B cell (primary cell): ENCODE measurements at regions of chr4 and their contacts with region 1.

Region 1: DNA sequence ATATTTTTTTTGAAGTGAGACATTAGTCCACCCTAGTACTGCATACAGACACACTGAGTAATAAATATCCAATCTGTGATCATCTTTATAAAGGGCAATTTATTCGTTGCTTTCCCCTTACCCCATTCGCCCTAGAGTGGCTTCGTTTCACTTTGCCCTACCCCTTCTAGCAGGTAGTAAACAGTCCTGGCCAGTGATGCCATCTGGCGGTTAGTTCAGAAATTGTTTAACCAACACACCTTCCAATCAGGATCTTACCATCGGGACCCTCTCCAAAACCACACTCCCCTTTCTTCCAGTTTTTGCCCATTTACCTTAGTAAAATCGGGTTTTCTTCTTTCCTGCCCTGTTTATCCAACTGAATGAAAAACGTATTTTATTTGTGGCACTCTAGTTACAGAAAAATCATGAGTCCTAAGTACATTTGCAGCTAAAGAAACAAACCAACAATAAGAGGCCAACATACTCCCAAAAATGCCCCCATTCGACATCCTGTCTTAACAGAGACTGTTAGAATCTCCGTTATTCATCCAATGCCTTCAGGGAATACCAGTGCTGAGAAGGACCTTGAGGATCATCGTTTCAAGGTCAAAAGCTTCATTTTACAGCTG is 2.2 kb downstream of the PPA2 start:
- DNase-seq: peak; percentile 83
- ATAC-seq: peak; percentile 32
- H3K4me3 ChIP-seq: no peak overlapping the region
- H3K4me3 Mint-ChIP-seq: peak overlapping the region; percentile 75
- H3K27ac ChIP-seq: no peak overlapping the region
- H3K27ac Mint-ChIP-seq: peak overlapping the region; percentile 42
- H3K4me1 ChIP-seq: peaks cover 17 to 23% of the 10 kb centered on the region in 2 donors
- H3K4me1 Mint-ChIP-seq: peaks cover 43% of the 10 kb centered on the region
- H3K27me3 ChIP-seq: peaks cover 0 to 4% (median 0%) of the 10 kb centered on the region in 4 experiments
- H3K27me3 Mint-ChIP-seq: no peaks in the 10 kb centered on the region
- CTCF ChIP-seq: peak; percentile 79

Region 2: GRCh38 chr4:104743215-104743653 is 728.4 kb before region 1 on chr4:
- CTCF ChIA-PET with region 1: interaction called, 3 read pairs
- POLR2A ChIA-PET with region 1: no interaction called
- intact Hi-C with region 1: loop called (anchors 5 kb)
- DNase-seq: peak; percentile 71
- ATAC-seq: peak; percentile 91
- H3K4me3 ChIP-seq: peak overlapping the region in 1 of 5 experiments; percentile 50
- H3K4me3 Mint-ChIP-seq: peak overlapping the region; percentile 62
- H3K27ac ChIP-seq: peak overlapping the region; percentile 56 to 63
- H3K27ac Mint-ChIP-seq: peak overlapping the region; percentile 82
- H3K4me1 ChIP-seq: peaks cover 16 to 19% of the 10 kb centered on the region in 2 donors
- H3K4me1 Mint-ChIP-seq: peaks cover 21% of the 10 kb centered on the region
- H3K27me3 ChIP-seq: no peaks in the 10 kb centered on the region
- H3K27me3 Mint-ChIP-seq: no peaks in the 10 kb centered on the region
- CTCF ChIP-seq: no peak

Region 3: GRCh38 chr4:105140684-105141490 is 330.8 kb before region 1 on chr4:
- CTCF ChIA-PET with region 1: interaction called, 79 read pairs
- POLR2A ChIA-PET with region 1: interaction called, 18 read pairs
- intact Hi-C with region 1: loop called (anchors 1 kb)
- DNase-seq: peak; percentile 75
- ATAC-seq: peak; percentile 55
- H3K4me3 ChIP-seq: no peak overlapping the region
- H3K4me3 Mint-ChIP-seq: no peak overlapping the region
- H3K27ac ChIP-seq: no peak overlapping the region
- H3K27ac Mint-ChIP-seq: no peak overlapping the region
- H3K4me1 ChIP-seq: peaks cover 6% of the 10 kb centered on the region in 2 donors
- H3K4me1 Mint-ChIP-seq: peaks cover 10% of the 10 kb centered on the region
- H3K27me3 ChIP-seq: no peaks in the 10 kb centered on the region
- H3K27me3 Mint-ChIP-seq: no peaks in the 10 kb centered on the region
- CTCF ChIP-seq: peak; percentile 79

Region 4: GRCh38 chr4:105483840-105484239 is 12.2 kb after region 1 on chr4:
- CTCF ChIA-PET with region 1: interaction called, 12 read pairs
- POLR2A ChIA-PET with region 1: no interaction called
- intact Hi-C with region 1: no loop called
- DNase-seq: no peak
- ATAC-seq: no peak
- H3K4me3 ChIP-seq: no peak overlapping the region
- H3K4me3 Mint-ChIP-seq: no peak overlapping the region
- H3K27ac ChIP-seq: no peak overlapping the region
- H3K27ac Mint-ChIP-seq: no peak overlapping the region
- H3K4me1 ChIP-seq: no peaks in the 10 kb centered on the region
- H3K4me1 Mint-ChIP-seq: no peaks in the 10 kb centered on the region
- H3K27me3 ChIP-seq: no peaks in the 10 kb centered on the region
- H3K27me3 Mint-ChIP-seq: peaks cover 13% of the 10 kb centered on the region
- CTCF ChIP-seq: no peak

Region 5: DNA sequence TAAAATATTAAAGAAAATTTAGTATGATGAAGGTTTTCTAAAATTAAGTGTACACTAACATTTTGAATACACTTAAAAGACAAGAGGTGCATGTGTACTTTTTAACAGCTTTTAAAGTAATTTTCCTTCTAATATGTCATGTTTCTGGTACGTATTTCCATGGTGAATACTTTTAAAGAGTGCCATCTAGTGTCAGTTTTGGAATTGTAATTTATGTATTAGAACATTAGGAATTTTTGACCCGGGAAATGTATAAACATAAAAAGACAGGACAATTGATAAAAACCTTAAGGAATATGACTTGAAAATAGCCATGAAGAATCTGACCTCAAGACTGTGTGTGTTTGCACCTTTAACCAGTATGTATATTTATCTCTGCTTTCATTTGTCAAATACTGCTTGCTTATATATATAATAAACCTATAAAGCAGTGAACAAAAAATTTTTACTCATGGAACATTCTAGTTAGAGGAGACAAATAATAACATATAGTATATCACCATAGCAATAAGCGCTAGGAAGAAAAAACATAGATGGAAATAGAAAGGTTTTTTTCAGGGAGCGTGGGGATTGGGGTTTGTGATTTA is 244.1 kb after region 1 on chr4:
- CTCF ChIA-PET with region 1: interaction called, 15 read pairs
- POLR2A ChIA-PET with region 1: no interaction called
- intact Hi-C with region 1: no loop called
- DNase-seq: peak; percentile 60
- ATAC-seq: no peak
- H3K4me3 ChIP-seq: no peak overlapping the region
- H3K4me3 Mint-ChIP-seq: no peak overlapping the region
- H3K27ac ChIP-seq: no peak overlapping the region
- H3K27ac Mint-ChIP-seq: no peak overlapping the region
- H3K4me1 ChIP-seq: peaks cover 8 to 11% of the 10 kb centered on the region in 2 donors
- H3K4me1 Mint-ChIP-seq: peaks cover 19% of the 10 kb centered on the region
- H3K27me3 ChIP-seq: no peaks in the 10 kb centered on the region
- H3K27me3 Mint-ChIP-seq: no peaks in the 10 kb centered on the region
- CTCF ChIP-seq: peak; percentile 77